ENCODE measurements at regions of chr12 and their contacts with region 1.

Region 1: DNA sequence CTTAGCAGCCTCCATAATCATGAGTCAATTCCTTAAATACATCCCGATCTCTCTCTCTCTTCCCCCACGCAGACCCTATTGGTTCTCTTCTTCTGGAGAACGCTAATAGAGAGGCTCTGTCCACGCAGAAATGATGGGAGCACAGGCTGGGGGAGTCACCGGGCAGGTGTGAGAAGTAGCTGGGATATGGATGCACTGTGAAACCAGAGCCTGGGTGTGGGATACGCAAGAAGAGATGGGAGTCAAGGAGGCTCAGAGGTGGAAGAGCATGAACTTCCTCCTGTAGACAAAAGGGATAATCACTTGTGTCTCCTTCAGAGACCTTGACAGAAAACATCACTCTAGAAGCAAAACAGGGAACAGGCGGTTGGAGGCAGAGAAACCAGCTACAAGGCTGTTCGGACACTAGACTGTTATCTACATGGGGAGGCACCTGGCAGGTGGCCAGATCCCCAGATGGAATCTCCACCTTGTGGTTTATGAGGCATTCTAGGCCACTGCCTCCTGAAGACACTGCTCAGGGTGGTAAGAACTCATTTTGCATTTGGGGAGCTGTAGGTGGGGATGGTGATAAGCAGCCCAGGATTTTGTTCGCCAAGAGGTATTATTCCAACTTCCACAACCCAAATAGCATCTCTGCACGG is 7.2 kb upstream of the SELPLG start:
- DNase-seq: peak; percentile 89
- H3K4me3 ChIP-seq: peak overlapping the region; percentile 41
- H3K27ac ChIP-seq: peak overlapping the region; percentile 99
- H3K4me1 ChIP-seq: peaks cover 92% of the 10 kb centered on the region
- CTCF ChIP-seq: no peak

Region 2: GRCh38 chr12:107385509-107385908 is 1255.4 kb before region 1 on chr12:
- CTCF ChIA-PET with region 1: no interaction called
- POLR2A ChIA-PET with region 1: no interaction called
- intact Hi-C with region 1: no loop called
- DNase-seq: no peak
- H3K4me3 ChIP-seq: no peak overlapping the region
- H3K27ac ChIP-seq: no peak overlapping the region
- H3K4me1 ChIP-seq: no peaks in the 10 kb centered on the region
- CTCF ChIP-seq: no peak

Region 3: GRCh38 chr12:108618079-108618952 is 22.6 kb before region 1 on chr12:
- CTCF ChIA-PET with region 1: interaction called, 18 read pairs
- POLR2A ChIA-PET with region 1: interaction called, 85 read pairs
- intact Hi-C with region 1: no loop called
- DNase-seq: peak; percentile 88
- H3K4me3 ChIP-seq: no peak overlapping the region
- H3K27ac ChIP-seq: peak overlapping the region; percentile 61
- H3K4me1 ChIP-seq: peaks cover 37% of the 10 kb centered on the region
- CTCF ChIP-seq: peak; percentile 100

Region 4: GRCh38 chr12:108731105-108731865 is 90.4 kb after region 1 on chr12 and contains the start of gene CORO1C:
- CTCF ChIA-PET with region 1: no interaction called
- POLR2A ChIA-PET with region 1: interaction called, 5 read pairs
- intact Hi-C with region 1: loop called (anchors 1 kb)
- DNase-seq: peak; percentile 96
- H3K4me3 ChIP-seq: peak within 1 kb of the TSS; percentile 90
- H3K27ac ChIP-seq: peak within 1 kb of the TSS; percentile 74
- H3K4me1 ChIP-seq: peaks cover 41% of the 10 kb centered on the region
- CTCF ChIP-seq: peak; percentile 85
- total RNA-seq, gene CORO1C: 74.7 and 76.3 TPM in 2 replicates

Measured in OCI-LY7 (cell line).